ENCODE measurements at regions of chr5 and their contacts with region 1.

Region 1: DNA sequence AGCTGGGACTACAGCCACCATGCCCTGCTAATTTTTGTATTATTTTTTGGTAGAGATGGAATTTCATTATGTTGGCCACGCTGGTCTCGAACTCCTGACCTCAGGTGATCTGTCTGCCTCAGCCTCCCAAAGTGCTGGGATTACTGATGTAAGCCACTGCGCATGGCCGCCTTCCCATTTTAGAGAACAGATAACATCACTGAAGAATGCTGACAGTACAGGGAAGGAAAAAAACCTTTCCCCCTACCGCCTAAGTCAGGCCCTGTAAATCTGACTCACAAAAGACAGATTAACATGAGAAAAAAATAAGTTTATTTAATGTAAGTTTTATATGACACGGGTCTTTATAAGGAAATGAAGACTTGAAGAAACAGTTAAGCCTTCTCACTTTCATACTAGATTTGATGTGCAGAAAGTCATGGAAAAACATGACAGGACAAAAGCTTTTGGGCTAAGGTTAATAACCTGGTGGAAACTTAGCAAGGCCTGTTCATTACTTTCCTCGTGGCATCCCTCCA is 227.2 kb upstream of the ZNF608 start:
- DNase-seq: no peak
- H3K4me3 ChIP-seq: no peak overlapping the region
- CTCF ChIP-seq: no peak
- POLR2A ChIP-seq: no peak

Region 2: GRCh38 chr5:124998534-124998933 is 24.9 kb after region 1 on chr5:
- intact Hi-C with region 1: loop called (anchors 2 kb)
- DNase-seq: no peak
- H3K4me3 ChIP-seq: no peak overlapping the region
- CTCF ChIP-seq: no peak
- POLR2A ChIP-seq: no peak